Dendritic cell treated with granulocyte-macrophage colony-stimulating factor and Interleukin-4, amounts not matched to agents 40 ng/mL and 50 ng/mL, for 4 days (primary cell): ENCODE measurements at regions of chr2 and their contacts with region 1.

Region 1: DNA sequence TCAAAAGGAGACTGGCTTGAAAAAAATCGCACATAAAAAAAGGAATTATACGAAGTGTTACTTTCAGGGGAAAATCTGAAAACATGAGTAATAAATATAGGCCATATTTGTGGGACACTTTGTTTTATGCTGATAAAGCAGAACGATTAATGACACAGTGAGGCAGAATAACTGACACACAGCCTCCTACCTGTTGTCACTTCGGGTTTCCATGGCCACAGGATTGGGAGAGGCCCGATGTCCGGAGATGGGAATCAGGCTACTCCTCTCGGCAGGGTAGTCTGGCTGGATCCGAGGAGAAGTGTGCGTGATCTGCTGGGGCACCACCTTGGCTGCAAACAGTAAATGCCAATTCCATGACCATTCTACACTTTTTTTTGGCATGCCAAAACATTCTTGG is 31.7 kb downstream of the SAP130 start:
- H3K4me3 Mint-ChIP-seq: no peak overlapping the region
- H3K27ac Mint-ChIP-seq: no peak overlapping the region
- H3K4me1 Mint-ChIP-seq: no peaks in the 10 kb centered on the region
- H3K27me3 Mint-ChIP-seq: no peaks in the 10 kb centered on the region

Region 2: DNA sequence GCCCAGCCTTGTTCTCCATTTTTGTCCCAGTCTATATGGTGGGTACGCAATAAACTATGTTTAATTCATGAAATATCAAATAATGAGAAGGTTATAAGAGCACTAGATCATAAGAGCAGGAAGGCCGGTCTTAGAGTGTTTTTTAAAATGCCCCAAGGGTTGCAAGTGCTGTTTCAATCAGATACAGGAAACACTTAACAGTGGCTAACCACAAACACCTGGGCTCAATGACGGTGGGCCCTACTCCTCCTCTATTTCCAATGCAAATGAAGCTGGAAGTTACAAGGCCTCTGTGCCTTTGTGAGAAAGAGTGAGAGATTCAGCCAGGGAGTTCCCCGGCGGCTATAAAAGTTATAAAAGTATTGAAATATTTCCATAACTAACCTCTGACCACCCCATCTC is 166.3 kb before region 1 on chr2:
- intact Hi-C with region 1: no loop called
- H3K4me3 Mint-ChIP-seq: no peak overlapping the region
- H3K27ac Mint-ChIP-seq: no peak overlapping the region
- H3K4me1 Mint-ChIP-seq: peaks cover 16% of the 10 kb centered on the region
- H3K27me3 Mint-ChIP-seq: no peaks in the 10 kb centered on the region

Region 3: DNA sequence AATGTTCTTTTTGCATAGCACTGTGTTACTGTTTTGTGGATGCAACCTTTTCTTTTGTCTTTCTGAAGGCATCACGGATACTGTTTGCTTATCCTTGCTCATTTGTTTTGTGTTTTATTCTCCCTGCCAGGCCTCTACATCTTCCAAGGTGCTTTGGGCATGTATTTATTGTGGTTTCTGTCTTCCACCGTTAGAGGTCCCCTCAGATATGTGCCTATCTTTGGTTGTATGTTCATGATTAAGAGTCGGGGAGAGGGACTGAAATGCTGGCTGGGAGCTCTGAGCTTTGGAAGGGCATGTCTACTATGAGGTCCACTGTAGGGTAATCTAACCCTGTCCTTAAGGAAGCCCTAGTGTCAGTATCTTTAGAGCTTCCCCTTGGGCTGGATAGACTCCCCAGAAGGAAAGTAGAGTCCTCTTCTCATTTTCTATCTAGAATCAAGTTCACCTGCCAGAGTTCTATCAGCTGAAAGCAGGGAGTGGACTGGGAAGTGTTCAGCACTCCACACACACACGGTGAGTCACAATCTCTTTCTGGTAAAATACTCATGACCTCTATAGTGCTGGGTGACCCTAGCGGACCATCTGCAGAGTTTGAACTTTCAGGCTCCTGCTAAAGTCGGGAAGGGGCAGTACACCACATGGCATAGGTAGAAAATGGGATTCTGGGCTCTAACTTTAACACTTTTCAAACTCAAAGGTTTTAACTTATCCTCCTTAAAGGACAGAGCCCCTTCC is 11.8 kb before region 1 on chr2:
- intact Hi-C with region 1: no loop called
- H3K4me3 Mint-ChIP-seq: no peak overlapping the region
- H3K27ac Mint-ChIP-seq: no peak overlapping the region
- H3K4me1 Mint-ChIP-seq: no peaks in the 10 kb centered on the region
- H3K27me3 Mint-ChIP-seq: no peaks in the 10 kb centered on the region

Region 4: GRCh38 chr2:128016620-128017019 is 20.5 kb after region 1 on chr2:
- intact Hi-C with region 1: no loop called
- H3K4me3 Mint-ChIP-seq: no peak overlapping the region
- H3K27ac Mint-ChIP-seq: no peak overlapping the region
- H3K4me1 Mint-ChIP-seq: no peaks in the 10 kb centered on the region
- H3K27me3 Mint-ChIP-seq: no peaks in the 10 kb centered on the region

Region 5: DNA sequence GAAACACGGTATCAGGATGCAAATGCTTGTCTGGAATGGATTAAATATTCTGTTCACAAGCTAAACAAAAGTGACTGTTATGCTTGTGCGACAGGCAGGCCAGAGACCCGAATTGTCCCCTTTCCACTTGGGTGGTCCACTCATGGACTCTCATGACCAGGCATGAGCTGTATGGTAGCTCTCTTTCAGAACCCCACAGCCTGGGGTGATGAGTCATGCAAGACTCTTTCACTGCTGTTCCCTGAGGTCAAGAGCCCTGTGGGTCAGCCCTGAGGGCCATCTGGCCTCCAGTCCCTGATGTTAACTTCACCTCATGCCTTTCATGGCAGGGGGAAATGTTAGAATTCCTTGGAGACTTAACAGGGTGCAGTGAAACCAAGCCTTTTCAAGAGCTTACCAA is 45.4 kb after region 1 on chr2:
- intact Hi-C with region 1: no loop called
- H3K4me3 Mint-ChIP-seq: no peak overlapping the region
- H3K27ac Mint-ChIP-seq: no peak overlapping the region
- H3K4me1 Mint-ChIP-seq: no peaks in the 10 kb centered on the region
- H3K27me3 Mint-ChIP-seq: peaks cover 16% of the 10 kb centered on the region

Region 6: DNA sequence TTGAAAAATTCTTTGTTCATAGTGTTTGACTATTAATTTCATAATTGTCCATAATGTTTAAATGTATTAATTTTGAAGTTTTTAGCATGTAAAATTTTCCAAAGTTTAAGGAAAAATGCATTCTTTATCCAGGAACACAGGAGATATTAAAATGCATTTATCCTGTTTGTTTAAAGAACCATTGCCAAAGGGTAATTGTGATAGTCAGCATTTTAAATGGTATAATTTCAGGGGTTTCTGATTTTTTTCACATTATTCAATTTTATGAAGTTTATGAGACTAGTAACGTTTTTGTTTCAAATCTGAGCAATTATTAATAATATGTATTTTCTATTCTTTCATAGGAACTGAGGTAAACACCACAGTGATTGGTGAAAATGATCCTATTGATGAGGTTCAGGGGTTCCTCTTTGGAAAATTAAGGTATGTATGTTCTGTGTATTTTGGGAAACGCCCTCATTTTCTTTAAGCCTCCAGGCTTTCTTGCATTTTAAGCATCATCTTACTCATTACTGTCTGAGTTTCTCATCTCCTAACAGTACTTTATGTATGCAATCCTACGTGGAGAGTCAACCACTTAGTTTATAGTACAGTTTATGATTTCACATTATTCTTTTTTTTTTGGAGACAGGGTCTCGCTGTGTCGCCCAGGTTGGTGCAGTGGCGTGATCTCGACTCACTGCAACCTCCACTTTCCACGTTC is 119.9 kb after region 1 on chr2:
- intact Hi-C with region 1: loop called (anchors 10 kb)
- H3K4me3 Mint-ChIP-seq: no peak overlapping the region
- H3K27ac Mint-ChIP-seq: no peak overlapping the region
- H3K4me1 Mint-ChIP-seq: no peaks in the 10 kb centered on the region
- H3K27me3 Mint-ChIP-seq: no peaks in the 10 kb centered on the region